CD8-positive, alpha-beta memory T cell (primary cell): ENCODE measurements at regions of chr14 and their contacts with region 1.

Region 1: DNA sequence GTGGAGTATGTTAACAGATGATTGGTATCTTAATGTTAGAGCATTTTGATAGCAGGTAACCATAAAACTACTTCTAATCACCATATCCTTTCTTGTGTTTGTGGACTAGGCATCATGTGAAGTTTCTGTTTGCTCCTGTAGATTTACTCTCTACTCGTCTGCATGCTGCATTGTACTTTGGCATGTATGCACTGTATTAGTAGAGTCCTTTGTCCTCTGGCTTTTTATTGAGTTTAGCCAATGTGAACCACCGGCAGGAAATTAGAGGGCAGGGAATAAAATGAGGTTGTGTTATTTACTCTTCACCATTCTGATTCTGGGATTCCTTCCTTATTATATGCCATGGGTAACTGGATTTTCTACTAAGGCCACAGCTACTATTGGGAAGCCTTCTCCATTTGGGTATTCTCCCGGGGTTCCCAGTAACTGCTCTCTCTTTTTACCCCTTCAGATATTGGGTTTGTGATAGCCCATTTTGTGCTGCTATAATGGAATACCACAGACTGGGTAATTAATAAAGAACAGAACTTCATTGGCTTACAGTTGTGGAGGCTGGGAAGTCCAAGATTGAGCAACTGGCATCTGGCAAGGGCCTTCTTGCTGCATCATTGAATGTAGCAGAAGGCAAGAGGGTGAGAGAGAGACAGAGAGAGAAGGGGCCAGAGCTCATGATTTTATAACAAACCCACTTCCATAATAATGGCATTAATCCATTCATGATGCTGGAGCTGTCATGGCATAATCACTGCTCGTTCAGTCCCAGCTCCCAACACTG is 22.4 kb downstream of the FAM177A1 start:
- DNase-seq: no peak
- H3K4me3 ChIP-seq: no peak overlapping the region
- H3K4me3 Mint-ChIP-seq: no peak overlapping the region
- H3K27ac ChIP-seq: no peak overlapping the region
- H3K27ac Mint-ChIP-seq: no peak overlapping the region
- H3K4me1 ChIP-seq: no peaks in the 10 kb centered on the region
- H3K4me1 Mint-ChIP-seq: peaks cover 0 to 3% (median 2%) of the 10 kb centered on the region in 3 donors
- H3K27me3 ChIP-seq: no peaks in the 10 kb centered on the region
- H3K27me3 Mint-ChIP-seq: no peaks in the 10 kb centered on the region

Region 2: GRCh38 chr14:35201066-35201465 is 132.6 kb after region 1 on chr14:
- CTCF ChIA-PET with region 1: no interaction called
- POLR2A ChIA-PET with region 1: interaction called, 13 read pairs
- DNase-seq: peak in 2 of 5 donors; percentile 7 to 10
- H3K4me3 ChIP-seq: no peak overlapping the region
- H3K4me3 Mint-ChIP-seq: peak overlapping the region in 5 of 7 donors; percentile 8 to 57 (median 54)
- H3K27ac ChIP-seq: no peak overlapping the region
- H3K27ac Mint-ChIP-seq: peak overlapping the region in 7 of 8 donors; percentile 70 to 86 (median 82)
- H3K4me1 ChIP-seq: peaks cover 50% of the 10 kb centered on the region
- H3K4me1 Mint-ChIP-seq: peaks cover 44 to 61% (median 59%) of the 10 kb centered on the region in 3 donors
- H3K27me3 ChIP-seq: no peaks in the 10 kb centered on the region
- H3K27me3 Mint-ChIP-seq: no peaks in the 10 kb centered on the region